GM12878 (cell line): ENCODE measurements at regions of chr7 and their contacts with region 1.

Region 1: DNA sequence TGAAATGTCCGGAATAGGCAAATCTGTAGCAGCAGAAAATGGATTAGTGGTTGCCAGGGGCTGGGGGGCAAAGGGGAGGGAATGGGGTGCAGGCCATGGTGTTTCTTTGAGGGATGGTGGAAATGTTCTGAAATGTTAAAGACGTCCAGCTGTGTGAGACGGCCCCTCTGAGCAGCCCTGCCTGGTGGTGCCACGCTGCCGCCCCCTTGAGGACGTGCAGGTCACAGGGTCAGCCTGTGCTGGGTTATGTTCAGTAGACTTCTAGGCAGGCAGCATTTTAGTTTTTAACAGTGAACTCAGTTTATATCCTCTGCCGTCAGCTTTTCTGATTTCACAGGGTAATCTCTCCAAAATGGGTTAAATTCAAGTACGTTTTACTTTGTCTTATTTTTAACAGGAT is 9.4 kb downstream of the NUB1 start:
- DNase-seq: no peak
- ATAC-seq: peak; percentile 76
- H3K4me3 ChIP-seq: peak overlapping the region; percentile 34; the same call in 1 of the 2 replicates
- H3K27ac ChIP-seq: peak overlapping the region; percentile 94
- H3K4me1 ChIP-seq: peaks cover 37% of the 10 kb centered on the region
- H3K27me3 ChIP-seq: no peaks in the 10 kb centered on the region
- CTCF ChIP-seq: peak; percentile 56 to 67 (median 59)
- EP300 ChIP-seq: no peak
- POLR2A ChIP-seq: no peak
- RAD21 ChIP-seq: peak; percentile 54

Region 2: GRCh38 chr7:151336027-151336708 is 14.9 kb before region 1 on chr7:
- CTCF ChIA-PET with region 1: interaction called, 73 read pairs
- POLR2A ChIA-PET with region 1: interaction called, 18 read pairs
- RAD21 ChIA-PET with region 1: interaction called, 23 read pairs
- SMC1A ChIA-PET with region 1: interaction called, 58 read pairs
- in situ Hi-C with region 1: no loop called
- intact Hi-C with region 1: no loop called
- DNase-seq: no peak
- ATAC-seq: no peak
- H3K4me3 ChIP-seq: no peak overlapping the region
- H3K27ac ChIP-seq: peak overlapping the region; percentile 38
- H3K4me1 ChIP-seq: peaks cover 20% of the 10 kb centered on the region
- H3K27me3 ChIP-seq: no peaks in the 10 kb centered on the region
- CTCF ChIP-seq: no peak
- EP300 ChIP-seq: no peak
- POLR2A ChIP-seq: no peak
- RAD21 ChIP-seq: no peak

Region 3: GRCh38 chr7:151361193-151361959 is 10.3 kb after region 1 on chr7:
- CTCF ChIA-PET with region 1: interaction called, 25 read pairs
- POLR2A ChIA-PET with region 1: no interaction called
- RAD21 ChIA-PET with region 1: interaction called, 7 read pairs
- SMC1A ChIA-PET with region 1: interaction called, 7 read pairs
- in situ Hi-C with region 1: no loop called
- intact Hi-C with region 1: no loop called
- DNase-seq: no peak
- ATAC-seq: no peak
- H3K4me3 ChIP-seq: no peak overlapping the region
- H3K27ac ChIP-seq: no peak overlapping the region
- H3K4me1 ChIP-seq: no peaks in the 10 kb centered on the region
- H3K27me3 ChIP-seq: no peaks in the 10 kb centered on the region
- CTCF ChIP-seq: no peak
- EP300 ChIP-seq: no peak
- POLR2A ChIP-seq: no peak
- RAD21 ChIP-seq: no peak

Region 4: DNA sequence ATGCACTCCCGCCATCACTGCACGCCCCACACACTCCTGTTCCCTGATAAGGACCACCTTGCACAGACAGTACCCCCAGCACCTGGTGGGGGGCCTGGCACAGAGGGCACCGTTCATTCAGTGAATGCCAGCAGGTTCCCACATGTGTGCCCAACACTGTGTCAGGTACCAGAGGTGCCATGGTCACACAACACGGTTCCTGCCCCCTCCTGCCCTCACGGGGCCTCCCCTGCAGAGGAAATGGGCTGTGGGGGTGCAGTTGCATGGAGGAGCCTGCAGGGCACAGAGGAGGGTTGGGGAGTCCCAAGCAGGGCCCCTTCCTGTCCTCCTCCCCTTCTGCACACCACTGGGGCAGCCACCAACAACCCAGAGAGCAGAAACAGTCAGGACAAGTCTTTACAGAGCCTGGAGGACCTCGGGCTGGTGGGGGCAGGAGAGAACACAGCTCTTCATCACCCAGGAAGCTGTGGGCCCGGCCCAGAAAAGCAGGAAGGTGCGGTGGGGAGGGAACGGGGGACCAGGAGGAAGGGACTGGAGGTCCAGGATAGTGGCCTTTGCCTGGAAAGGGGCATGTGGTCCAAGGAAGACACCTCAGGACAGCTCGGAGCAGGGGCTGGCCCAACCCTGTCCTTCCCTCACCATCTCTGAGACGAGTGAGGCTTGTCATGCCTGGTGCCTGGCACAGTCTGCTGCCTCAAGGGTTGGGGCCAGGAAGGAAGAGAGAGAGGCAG is 81.9 kb after region 1 on chr7:
- CTCF ChIA-PET with region 1: no interaction called
- POLR2A ChIA-PET with region 1: no interaction called
- RAD21 ChIA-PET with region 1: no interaction called
- SMC1A ChIA-PET with region 1: no interaction called
- in situ Hi-C with region 1: no loop called
- intact Hi-C with region 1: no loop called
- DNase-seq: peak; percentile 11
- ATAC-seq: peak; percentile 89
- H3K4me3 ChIP-seq: no peak overlapping the region
- H3K27ac ChIP-seq: no peak overlapping the region
- H3K4me1 ChIP-seq: peaks cover 22% of the 10 kb centered on the region
- H3K27me3 ChIP-seq: no peaks in the 10 kb centered on the region; a peak in 1 of 4 replicates
- CTCF ChIP-seq: peak in 2 of 3 experiments; percentile 51 to 53; a peak in 4 of 6 replicates
- EP300 ChIP-seq: no peak
- POLR2A ChIP-seq: no peak
- RAD21 ChIP-seq: 0 out of 2 replicates have a peak, but pooled peaks have one; percentile 12